ENCODE measurements at regions of chr17 and their contacts with region 1.

Region 1: DNA sequence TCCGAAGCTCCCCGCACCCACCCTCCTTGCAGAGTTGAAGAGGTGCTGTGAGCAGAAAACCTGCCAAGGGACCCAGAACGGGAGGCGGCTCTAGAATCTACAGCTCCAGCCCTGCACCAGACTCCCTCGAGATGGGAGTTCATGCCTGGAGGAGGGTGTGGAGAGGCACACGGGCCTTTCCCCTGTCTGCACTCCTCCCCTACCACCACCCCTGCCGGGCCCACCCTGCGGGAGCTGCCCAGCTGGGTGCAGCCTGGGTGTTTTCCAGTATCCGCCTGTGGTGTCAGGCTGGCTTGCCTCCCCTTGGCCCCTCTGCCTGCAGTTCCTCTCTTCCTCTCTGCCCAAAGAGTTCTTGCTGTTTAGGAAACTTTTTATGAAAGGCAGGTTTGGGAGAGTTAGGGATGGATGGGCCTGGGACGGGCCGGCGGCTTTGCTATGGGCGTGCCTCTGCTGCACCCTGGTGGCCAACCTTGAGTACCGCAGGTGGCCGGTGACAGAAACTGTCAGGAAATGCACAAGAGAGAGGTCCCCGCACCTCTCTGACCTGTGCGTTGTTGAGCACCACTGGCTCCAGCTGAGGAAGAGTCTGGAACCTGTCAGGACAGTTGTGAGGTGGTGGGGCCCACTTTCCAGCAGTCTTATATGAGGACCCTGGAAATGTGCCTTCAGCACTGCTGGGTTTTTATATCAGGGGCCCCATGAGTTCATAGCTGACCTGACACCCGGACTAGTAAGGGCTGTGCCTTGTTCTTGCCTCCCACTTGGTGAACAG is 354.1 kb downstream of the SEC14L1 start:
- DNase-seq: peak; percentile 61 to 91
- H3K4me3 ChIP-seq: no peak overlapping the region
- H3K27ac ChIP-seq: no peak overlapping the region
- H3K4me1 ChIP-seq: peaks cover 0 to 5% (median 1%) of the 10 kb centered on the region in 4 experiments; a peak in 4 of 7 replicates
- H3K27me3 ChIP-seq: no peaks in the 10 kb centered on the region
- CTCF ChIP-seq: peak; percentile 93 to 94 (median 94)
- EP300 ChIP-seq: no peak
- POLR2A ChIP-seq: 0 out of 3 replicates have a peak, but pooled peaks of 1 of the 2 experiments have one; percentile 20
- RAD21 ChIP-seq: peak; percentile 98 to 99

Region 2: GRCh38 chr17:77331301-77331864 is 163.5 kb before region 1 on chr17:
- CTCF ChIA-PET with region 1: interaction called, 37 read pairs
- POLR2A ChIA-PET with region 1: no interaction called
- DNase-seq: peak; percentile 62 to 99
- H3K4me3 ChIP-seq: peak overlapping the region in 1 of 4 experiments; percentile 39; a peak in 2 of 8 replicates
- H3K27ac ChIP-seq: no peak overlapping the region
- H3K4me1 ChIP-seq: peaks cover 0 to 9% (median under 1%) of the 10 kb centered on the region in 4 experiments; a peak in 3 of 7 replicates
- H3K27me3 ChIP-seq: no peaks in the 10 kb centered on the region
- CTCF ChIP-seq: peak; percentile 90 to 94 (median 92)
- EP300 ChIP-seq: no peak
- POLR2A ChIP-seq: no peak
- RAD21 ChIP-seq: peak; percentile 97

Region 3: GRCh38 chr17:77404812-77405581 is 89.9 kb before region 1 on chr17:
- CTCF ChIA-PET with region 1: interaction called, 18 read pairs
- POLR2A ChIA-PET with region 1: no interaction called
- DNase-seq: no peak
- H3K4me3 ChIP-seq: no peak overlapping the region
- H3K27ac ChIP-seq: no peak overlapping the region
- H3K4me1 ChIP-seq: peaks cover 6 to 25% (median 15%) of the 10 kb centered on the region in 4 experiments
- H3K27me3 ChIP-seq: no peaks in the 10 kb centered on the region
- CTCF ChIP-seq: no peak
- EP300 ChIP-seq: no peak
- POLR2A ChIP-seq: no peak
- RAD21 ChIP-seq: no peak

Region 4: GRCh38 chr17:77420804-77421629 is 73.8 kb before region 1 on chr17:
- CTCF ChIA-PET with region 1: interaction called, 20 read pairs
- POLR2A ChIA-PET with region 1: interaction called, 3 read pairs
- DNase-seq: peak in 1 of 2 experiments; percentile 69
- H3K4me3 ChIP-seq: peak overlapping the region in 1 of 4 experiments; percentile 3; a peak in 1 of 8 replicates
- H3K27ac ChIP-seq: peak overlapping the region; percentile 70
- H3K4me1 ChIP-seq: peaks cover 7 to 52% (median 42%) of the 10 kb centered on the region in 4 experiments
- H3K27me3 ChIP-seq: no peaks in the 10 kb centered on the region
- CTCF ChIP-seq: no peak
- EP300 ChIP-seq: no peak
- POLR2A ChIP-seq: no peak
- RAD21 ChIP-seq: no peak

Region 5: GRCh38 chr17:77451245-77451893 is 43.5 kb before region 1 on chr17:
- CTCF ChIA-PET with region 1: interaction called, 13 read pairs
- POLR2A ChIA-PET with region 1: no interaction called
- DNase-seq: peak; percentile 71 to 88
- H3K4me3 ChIP-seq: peak overlapping the region; percentile 50 to 78 (median 61)
- H3K27ac ChIP-seq: peak overlapping the region; percentile 66
- H3K4me1 ChIP-seq: peaks cover 26 to 45% (median 36%) of the 10 kb centered on the region in 4 experiments
- H3K27me3 ChIP-seq: no peaks in the 10 kb centered on the region
- CTCF ChIP-seq: no peak
- EP300 ChIP-seq: 0 out of 3 replicates have a peak, but pooled peaks of 1 of the 2 experiments have one; percentile 12
- POLR2A ChIP-seq: peak; percentile 46 to 80
- RAD21 ChIP-seq: no peak; a peak in 1 of 4 replicates

Region 6: DNA sequence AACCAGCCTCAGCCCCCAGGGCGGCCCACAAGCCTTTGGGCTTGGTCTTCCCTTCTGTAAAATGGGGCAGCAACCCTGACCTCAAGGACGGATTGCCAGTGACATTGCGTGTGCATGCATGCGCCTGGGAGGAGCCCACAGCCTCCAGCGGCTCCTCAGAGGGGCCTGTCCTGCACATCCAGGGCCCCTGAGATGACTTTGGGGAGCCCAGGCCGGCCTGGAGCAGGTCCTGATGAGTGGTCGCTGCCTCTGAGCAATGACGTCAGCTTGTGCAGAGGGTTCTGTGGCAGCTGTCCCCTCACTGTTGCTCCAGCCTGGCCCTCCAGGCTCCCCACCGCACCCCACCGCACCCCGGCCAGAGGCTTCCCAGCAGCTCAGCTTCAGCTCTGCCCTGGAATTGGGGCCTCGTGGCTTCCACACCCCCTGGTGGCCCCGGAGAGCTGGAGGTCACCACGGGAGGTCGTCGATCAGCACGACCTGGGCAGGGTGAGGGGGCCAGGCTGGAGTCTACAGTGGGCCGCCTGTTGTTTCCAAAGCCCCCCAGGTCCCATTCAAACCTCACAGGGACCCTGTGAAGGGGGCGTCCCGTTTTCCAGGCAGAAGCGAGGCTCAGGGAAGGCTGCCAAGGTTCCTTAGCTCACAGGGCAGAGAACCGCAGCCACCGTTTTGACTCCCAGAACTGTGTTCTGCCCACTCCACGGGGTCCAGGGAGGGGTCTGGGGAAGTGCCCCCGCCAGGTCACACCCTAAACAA is 12.3 kb before region 1 on chr17:
- CTCF ChIA-PET with region 1: interaction called, 12 read pairs
- POLR2A ChIA-PET with region 1: interaction called, 3 read pairs
- DNase-seq: no peak
- H3K4me3 ChIP-seq: no peak overlapping the region
- H3K27ac ChIP-seq: no peak overlapping the region
- H3K4me1 ChIP-seq: peaks cover 8 to 28% (median 22%) of the 10 kb centered on the region in 4 experiments
- H3K27me3 ChIP-seq: no peaks in the 10 kb centered on the region
- CTCF ChIP-seq: no peak
- EP300 ChIP-seq: no peak
- POLR2A ChIP-seq: no peak
- RAD21 ChIP-seq: no peak

Region 7: GRCh38 chr17:77507111-77507885 is 12.4 kb after region 1 on chr17:
- CTCF ChIA-PET with region 1: interaction called, 13 read pairs
- POLR2A ChIA-PET with region 1: no interaction called
- DNase-seq: no peak
- H3K4me3 ChIP-seq: no peak overlapping the region
- H3K27ac ChIP-seq: no peak overlapping the region
- H3K4me1 ChIP-seq: peaks cover 0 to 7% (median 4%) of the 10 kb centered on the region in 4 experiments; a peak in 3 of 7 replicates
- H3K27me3 ChIP-seq: no peaks in the 10 kb centered on the region
- CTCF ChIP-seq: peak; percentile 38 to 43 (median 38); a peak in 3 of 4 replicates
- EP300 ChIP-seq: no peak
- POLR2A ChIP-seq: no peak
- RAD21 ChIP-seq: peak; percentile 49 to 70

Region 8: DNA sequence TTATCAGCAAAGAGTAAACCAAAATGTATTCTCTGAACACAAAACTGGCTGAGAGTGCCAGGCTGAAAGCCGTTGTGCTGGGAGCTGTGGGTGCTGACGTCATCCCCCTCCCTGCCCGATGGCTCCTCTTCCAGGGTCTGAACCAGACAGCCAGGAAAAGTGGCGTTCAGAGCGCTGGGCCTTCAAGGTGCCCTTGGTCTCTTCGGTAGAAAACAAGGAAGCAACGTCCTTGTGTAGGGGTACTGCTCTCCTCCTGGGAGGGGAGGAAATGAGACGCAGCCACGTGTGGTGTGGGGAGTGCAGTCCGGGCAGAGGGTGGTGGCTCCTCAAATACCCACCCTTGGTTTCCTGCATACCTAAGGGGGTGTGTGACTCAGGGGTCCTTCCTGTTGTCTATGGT is 40.6 kb after region 1 on chr17:
- CTCF ChIA-PET with region 1: no interaction called
- POLR2A ChIA-PET with region 1: no interaction called
- DNase-seq: no peak
- H3K4me3 ChIP-seq: no peak overlapping the region
- H3K27ac ChIP-seq: no peak overlapping the region
- H3K4me1 ChIP-seq: peaks cover 0 to 2% (median under 1%) of the 10 kb centered on the region in 4 experiments; a peak in 4 of 7 replicates
- H3K27me3 ChIP-seq: peaks cover 0 to 3% (median under 1%) of the 10 kb centered on the region in 4 experiments; a peak in 3 of 7 replicates
- CTCF ChIP-seq: no peak
- EP300 ChIP-seq: no peak
- POLR2A ChIP-seq: no peak
- RAD21 ChIP-seq: no peak

Region 9: GRCh38 chr17:77645072-77646045 is 150.5 kb after region 1 on chr17:
- CTCF ChIA-PET with region 1: no interaction called
- POLR2A ChIA-PET with region 1: no interaction called
- DNase-seq: no peak
- H3K4me3 ChIP-seq: no peak overlapping the region
- H3K27ac ChIP-seq: no peak overlapping the region
- H3K4me1 ChIP-seq: peaks cover 0 to 7% (median 3%) of the 10 kb centered on the region in 4 experiments; a peak in 6 of 7 replicates
- H3K27me3 ChIP-seq: no peaks in the 10 kb centered on the region; a peak in 2 of 7 replicates
- CTCF ChIP-seq: peak; percentile 44 to 54 (median 46); a peak in 3 of 4 replicates
- EP300 ChIP-seq: no peak
- POLR2A ChIP-seq: no peak
- RAD21 ChIP-seq: peak; percentile 36 to 60; a peak in 3 of 4 replicates